Calu3 (cell line): ENCODE measurements at regions of chr12 and their contacts with region 1.

Region 1: GRCh38 chr12:67355578-67356379 is 86.6 kb downstream of the CAND1 start:
- DNase-seq: peak; percentile 11
- H3K4me3 Mint-ChIP-seq: no peak overlapping the region
- H3K27ac Mint-ChIP-seq: no peak overlapping the region
- H3K4me1 Mint-ChIP-seq: no peaks in the 10 kb centered on the region
- H3K27me3 Mint-ChIP-seq: no peaks in the 10 kb centered on the region
- CTCF ChIP-seq: peak; percentile 29

Region 2: GRCh38 chr12:67320614-67321295 is 35.0 kb before region 1 on chr12:
- CTCF ChIA-PET with region 1: interaction called, 13 read pairs
- intact Hi-C with region 1: no loop called
- DNase-seq: no peak
- H3K4me3 Mint-ChIP-seq: no peak overlapping the region
- H3K27ac Mint-ChIP-seq: peak overlapping the region; percentile 15
- H3K4me1 Mint-ChIP-seq: no peaks in the 10 kb centered on the region
- H3K27me3 Mint-ChIP-seq: no peaks in the 10 kb centered on the region
- CTCF ChIP-seq: no peak

Region 3: GRCh38 chr12:67441736-67442346 is 86.1 kb after region 1 on chr12:
- CTCF ChIA-PET with region 1: interaction called, 6 read pairs
- intact Hi-C with region 1: loop called (anchors 2 kb)
- DNase-seq: peak; percentile 90
- H3K4me3 Mint-ChIP-seq: no peak overlapping the region
- H3K27ac Mint-ChIP-seq: no peak overlapping the region
- H3K4me1 Mint-ChIP-seq: peaks cover 6% of the 10 kb centered on the region
- H3K27me3 Mint-ChIP-seq: no peaks in the 10 kb centered on the region
- CTCF ChIP-seq: peak; percentile 78

Region 4: DNA sequence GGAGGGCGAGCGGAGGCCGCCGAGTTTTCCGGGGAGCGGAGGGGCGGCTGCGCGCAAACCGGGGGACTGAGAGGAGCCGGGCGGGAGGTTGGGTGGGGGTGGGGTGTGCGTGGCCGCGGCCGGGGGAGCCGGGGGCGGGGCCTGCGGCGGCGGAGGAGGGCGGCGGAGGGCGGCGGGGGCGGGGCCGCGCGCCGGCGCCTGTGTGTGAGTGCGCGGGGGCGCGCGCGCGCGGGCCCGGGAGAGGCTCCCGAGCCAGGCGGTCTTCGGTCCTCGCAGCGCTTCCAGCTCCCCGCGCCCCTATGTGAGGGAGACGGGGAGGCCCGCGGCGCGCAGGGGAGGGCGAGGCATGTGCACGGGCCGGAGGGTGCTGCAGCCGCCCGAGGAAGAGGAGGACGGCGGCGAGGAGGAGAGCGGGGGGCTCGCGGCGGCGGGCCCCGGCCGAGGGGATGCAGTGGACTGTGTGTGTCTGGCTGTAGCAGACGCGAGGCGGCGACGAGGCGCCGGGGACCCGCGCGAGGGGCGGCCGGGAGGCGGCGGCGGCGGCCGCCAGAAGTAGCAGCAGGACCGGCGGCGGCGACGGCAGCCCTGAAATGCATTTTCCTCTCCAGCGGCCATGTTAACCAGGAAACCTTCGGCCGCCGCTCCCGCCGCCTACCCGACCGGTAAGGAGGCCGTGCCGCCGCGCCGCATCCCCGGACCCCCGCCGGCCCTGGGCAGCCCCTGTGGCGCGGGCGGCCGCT is 292.9 kb after region 1 on chr12 and contains the start of gene DYRK2:
- CTCF ChIA-PET with region 1: interaction called, 7 read pairs
- intact Hi-C with region 1: loop called (anchors 5 kb)
- DNase-seq: peak; percentile 88
- H3K4me3 Mint-ChIP-seq: peak within 1 kb of the TSS; percentile 84
- H3K27ac Mint-ChIP-seq: peak within 1 kb of the TSS; percentile 93
- H3K4me1 Mint-ChIP-seq: peaks cover 30% of the 10 kb centered on the region
- H3K27me3 Mint-ChIP-seq: no peaks in the 10 kb centered on the region
- CTCF ChIP-seq: no peak
- total RNA-seq, gene DYRK2: 62.3 and 74.6 TPM in 2 replicates

Region 5: GRCh38 chr12:67943226-67943892 is 587.6 kb after region 1 on chr12:
- CTCF ChIA-PET with region 1: interaction called, 22 read pairs
- intact Hi-C with region 1: loop called (anchors 1 kb)
- DNase-seq: peak; percentile 72
- H3K4me3 Mint-ChIP-seq: no peak overlapping the region
- H3K27ac Mint-ChIP-seq: peak overlapping the region; percentile 10
- H3K4me1 Mint-ChIP-seq: peaks cover 39% of the 10 kb centered on the region
- H3K27me3 Mint-ChIP-seq: no peaks in the 10 kb centered on the region
- CTCF ChIP-seq: peak; percentile 35

Region 6: GRCh38 chr12:68317047-68317667 is 961.4 kb after region 1 on chr12:
- CTCF ChIA-PET with region 1: no interaction called
- intact Hi-C with region 1: loop called (anchors 5 kb)
- DNase-seq: peak; percentile 35
- H3K4me3 Mint-ChIP-seq: no peak overlapping the region
- H3K27ac Mint-ChIP-seq: no peak overlapping the region
- H3K4me1 Mint-ChIP-seq: no peaks in the 10 kb centered on the region
- H3K27me3 Mint-ChIP-seq: no peaks in the 10 kb centered on the region
- CTCF ChIP-seq: no peak